ENCODE measurements at regions of chr20 and their contacts with region 1.

Region 1: GRCh38 chr20:10501402-10501801 is 66.3 kb downstream of the SLX4IP start:
- DNase-seq: no peak
- H3K4me3 ChIP-seq: no peak overlapping the region
- H3K27ac ChIP-seq: no peak overlapping the region
- H3K4me1 ChIP-seq: peaks cover 10% of the 10 kb centered on the region
- H3K27me3 ChIP-seq: no peaks in the 10 kb centered on the region
- CTCF ChIP-seq: no peak
- EP300 ChIP-seq: no peak
- POLR2A ChIP-seq: no peak

Region 2: DNA sequence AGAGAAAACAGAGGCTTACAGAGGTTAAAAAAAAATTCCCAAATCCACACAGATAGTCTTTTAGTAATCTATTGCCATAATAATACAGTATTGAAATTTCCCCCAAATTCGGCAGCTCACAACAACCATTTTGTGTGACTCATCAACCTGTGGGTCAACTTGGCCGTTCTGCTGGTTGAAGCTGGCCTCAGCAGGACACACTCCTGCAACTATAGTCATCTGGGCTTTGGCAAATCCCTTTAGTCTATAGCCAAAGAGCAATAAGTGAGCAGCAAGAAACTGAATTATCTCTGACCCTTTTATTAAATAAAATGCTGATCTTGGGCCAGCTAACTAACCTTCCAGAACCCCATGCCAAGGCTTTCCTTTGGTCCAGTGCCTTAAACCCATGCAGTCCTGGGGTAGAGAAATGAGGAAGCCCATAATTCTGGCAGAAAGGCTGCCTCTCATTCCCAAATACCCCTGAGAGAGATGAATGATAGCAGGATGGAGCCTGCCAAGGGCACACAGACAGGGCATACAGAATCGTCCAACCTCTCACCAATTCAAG is 300.0 kb before region 1 on chr20:
- intact Hi-C with region 1: loop called in 1 of 4 experiments (anchors 5 kb)
- DNase-seq: no peak
- H3K4me3 ChIP-seq: no peak overlapping the region
- H3K27ac ChIP-seq: no peak overlapping the region
- H3K4me1 ChIP-seq: no peaks in the 10 kb centered on the region
- H3K27me3 ChIP-seq: no peaks in the 10 kb centered on the region
- CTCF ChIP-seq: no peak
- EP300 ChIP-seq: no peak
- POLR2A ChIP-seq: no peak

Region 3: GRCh38 chr20:10297684-10298240 is 203.6 kb before region 1 on chr20:
- intact Hi-C with region 1: no loop called
- DNase-seq: no peak
- H3K4me3 ChIP-seq: no peak overlapping the region
- H3K27ac ChIP-seq: no peak overlapping the region
- H3K4me1 ChIP-seq: no peaks in the 10 kb centered on the region
- H3K27me3 ChIP-seq: no peaks in the 10 kb centered on the region
- CTCF ChIP-seq: no peak
- EP300 ChIP-seq: no peak
- POLR2A ChIP-seq: no peak